CD8-positive, alpha-beta T cell (primary cell): ENCODE measurements at regions of chr16 and their contacts with region 1.

Region 1: DNA sequence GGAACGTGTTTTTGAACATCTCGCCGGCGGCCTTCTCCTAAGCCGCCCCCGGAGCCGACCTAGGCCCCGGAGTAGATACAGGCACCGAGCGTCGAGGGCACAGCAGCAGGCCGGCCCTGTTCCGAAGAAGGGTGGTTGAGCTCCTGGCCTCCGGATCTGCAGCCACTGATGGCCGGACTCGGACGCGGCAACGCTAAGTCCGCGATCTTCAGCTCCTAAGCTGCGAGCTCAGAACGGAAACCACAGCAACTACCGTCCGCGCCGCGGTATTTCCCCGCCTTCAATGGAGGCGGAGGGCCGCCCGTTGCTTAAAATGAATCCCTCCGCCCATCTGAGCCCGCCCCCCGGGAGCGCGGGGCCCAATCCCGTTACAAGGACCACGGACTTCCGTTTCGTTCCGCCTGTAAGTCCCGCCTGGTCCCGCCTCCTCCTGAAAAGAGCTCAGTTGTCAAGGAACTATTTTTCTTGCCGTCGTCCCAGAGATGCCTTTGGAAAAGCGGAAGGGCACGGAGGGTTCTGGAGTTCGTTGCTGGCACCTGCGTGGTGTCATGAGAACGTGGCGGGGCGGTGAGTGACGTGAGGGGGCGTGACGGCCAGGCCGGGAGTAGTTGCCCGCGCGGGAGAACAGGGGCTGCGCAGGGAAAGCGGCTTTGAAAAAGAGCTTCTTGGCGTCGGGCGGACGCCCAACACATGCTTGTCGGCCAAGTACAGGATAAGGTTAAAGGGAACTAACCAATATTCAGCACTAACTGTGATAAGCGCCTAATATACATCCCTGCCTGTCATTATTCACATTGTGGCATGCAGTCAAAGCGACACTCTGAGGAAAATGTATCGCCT is at the start of gene CFAP20:
- DNase-seq: peak; percentile 92 to 98 (median 96)
- ATAC-seq: peak; percentile 90
- H3K4me3 ChIP-seq: peak within 1 kb of the TSS; percentile 75 to 95
- H3K4me3 Mint-ChIP-seq: peak within 1 kb of the TSS; percentile 99
- H3K27ac ChIP-seq: peak within 1 kb of the TSS; percentile 82 to 91
- H3K27ac Mint-ChIP-seq: peak within 1 kb of the TSS; percentile 98
- H3K4me1 ChIP-seq: peaks cover 30% of the 10 kb centered on the region
- H3K4me1 Mint-ChIP-seq: peaks cover 44% of the 10 kb centered on the region
- H3K27me3 ChIP-seq: no peaks in the 10 kb centered on the region
- H3K27me3 Mint-ChIP-seq: no peaks in the 10 kb centered on the region
- CTCF ChIP-seq: no peak
- total RNA-seq, gene CFAP20: 102 to 104 TPM

Region 2: GRCh38 chr16:56450986-56451752 is 1678.1 kb before region 1 on chr16 and contains the starts of genes NUDT21 and OGFOD1:
- CTCF ChIA-PET with region 1: no interaction called
- POLR2A ChIA-PET with region 1: no interaction called
- intact Hi-C with region 1: loop called in 1 of 2 experiments (anchors 10 kb)
- DNase-seq: peak; percentile 82 to 98 (median 90)
- ATAC-seq: peak; percentile 98
- H3K4me3 ChIP-seq: peak within 1 kb of the TSS; percentile 85 to 87
- H3K4me3 Mint-ChIP-seq: peak within 1 kb of the TSS; percentile 97
- H3K27ac ChIP-seq: peak within 1 kb of the TSS; percentile 76 to 77
- H3K27ac Mint-ChIP-seq: peak within 1 kb of the TSS; percentile 94
- H3K4me1 ChIP-seq: peaks cover 31% of the 10 kb centered on the region
- H3K4me1 Mint-ChIP-seq: peaks cover 60% of the 10 kb centered on the region
- H3K27me3 ChIP-seq: no peaks in the 10 kb centered on the region
- H3K27me3 Mint-ChIP-seq: no peaks in the 10 kb centered on the region
- CTCF ChIP-seq: no peak
- total RNA-seq, gene NUDT21: 99.1 to 106 TPM
- total RNA-seq, gene OGFOD1: 17.0 to 21.5 TPM

Region 3: DNA sequence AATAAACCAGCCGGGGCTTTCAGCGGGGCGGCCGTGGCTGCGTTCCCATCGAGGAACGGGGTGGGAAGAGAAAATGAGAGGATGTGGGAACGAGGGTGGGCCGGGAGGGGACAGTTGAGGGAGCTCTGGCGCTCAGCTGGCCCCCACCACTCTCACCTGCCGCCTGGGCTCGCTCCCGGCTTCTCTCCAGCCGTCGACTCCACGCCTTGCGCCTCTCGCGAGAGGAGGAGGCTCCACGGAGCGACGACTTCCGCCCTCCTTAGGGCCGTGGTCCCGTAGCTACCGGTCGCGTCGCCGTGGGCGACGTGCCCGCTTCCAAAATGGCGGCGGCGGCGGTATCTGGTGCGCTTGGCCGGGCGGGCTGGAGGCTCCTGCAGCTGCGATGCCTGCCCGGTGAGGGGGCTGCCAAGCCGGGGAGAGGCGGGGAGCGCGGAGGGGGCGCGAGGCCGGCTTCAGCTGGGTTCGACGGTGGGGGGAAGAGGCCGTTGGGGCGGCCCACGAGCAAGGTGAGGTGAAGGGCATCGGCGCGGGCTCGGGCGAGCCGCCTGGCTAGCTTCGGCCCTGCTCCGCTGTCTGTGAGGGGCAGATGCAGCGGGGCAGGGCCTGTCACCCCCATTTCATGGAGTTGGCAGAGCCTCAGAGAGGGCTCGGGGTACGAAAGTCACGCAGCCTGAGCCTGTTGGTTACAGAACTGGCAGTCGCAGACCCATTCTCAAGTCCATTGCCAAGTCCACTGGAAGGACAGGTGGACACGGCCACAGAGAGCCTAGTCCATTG is 681.9 kb before region 1 on chr16 and contains the starts of genes CIAPIN1 and COQ9:
- CTCF ChIA-PET with region 1: no interaction called
- POLR2A ChIA-PET with region 1: no interaction called
- intact Hi-C with region 1: loop called in 1 of 2 experiments (anchors 5 kb)
- DNase-seq: peak; percentile 85 to 97 (median 92)
- ATAC-seq: peak; percentile 98
- H3K4me3 ChIP-seq: peak within 1 kb of the TSS; percentile 93 to 96
- H3K4me3 Mint-ChIP-seq: peak within 1 kb of the TSS; percentile 91
- H3K27ac ChIP-seq: peak within 1 kb of the TSS; percentile 79 to 83
- H3K27ac Mint-ChIP-seq: peak within 1 kb of the TSS; percentile 93
- H3K4me1 ChIP-seq: peaks cover 20% of the 10 kb centered on the region
- H3K4me1 Mint-ChIP-seq: peaks cover 53% of the 10 kb centered on the region
- H3K27me3 ChIP-seq: no peaks in the 10 kb centered on the region
- H3K27me3 Mint-ChIP-seq: no peaks in the 10 kb centered on the region
- CTCF ChIP-seq: no peak
- total RNA-seq, gene CIAPIN1: 28.6 to 29.7 TPM
- total RNA-seq, gene COQ9: 8.1 to 11.7 TPM

Region 4: GRCh38 chr16:57899771-57900661 is 229.3 kb before region 1 on chr16:
- CTCF ChIA-PET with region 1: no interaction called
- POLR2A ChIA-PET with region 1: no interaction called
- intact Hi-C with region 1: loop called (anchors 5 kb)
- DNase-seq: peak; percentile 59 to 89 (median 82)
- ATAC-seq: peak; percentile 76
- H3K4me3 ChIP-seq: no peak overlapping the region
- H3K4me3 Mint-ChIP-seq: no peak overlapping the region
- H3K27ac ChIP-seq: no peak overlapping the region
- H3K27ac Mint-ChIP-seq: no peak overlapping the region
- H3K4me1 ChIP-seq: no peaks in the 10 kb centered on the region
- H3K4me1 Mint-ChIP-seq: peaks cover 3% of the 10 kb centered on the region
- H3K27me3 ChIP-seq: no peaks in the 10 kb centered on the region
- H3K27me3 Mint-ChIP-seq: peaks cover 20% of the 10 kb centered on the region
- CTCF ChIP-seq: peak; percentile 92

Region 5: GRCh38 chr16:58025351-58026138 is 103.8 kb before region 1 on chr16 and contains the start of gene MMP15:
- CTCF ChIA-PET with region 1: interaction called, 3 read pairs
- POLR2A ChIA-PET with region 1: no interaction called
- intact Hi-C with region 1: loop called (anchors 1 to 2 kb)
- DNase-seq: peak in 8 of 9 experiments; percentile 39 to 71 (median 60)
- ATAC-seq: peak; percentile 65
- H3K4me3 ChIP-seq: peak within 1 kb of the TSS; percentile 60 to 66
- H3K4me3 Mint-ChIP-seq: peak within 1 kb of the TSS; percentile 90
- H3K27ac ChIP-seq: peak within 1 kb of the TSS in 1 of 2 experiments; percentile 18
- H3K27ac Mint-ChIP-seq: peak within 1 kb of the TSS; percentile 83
- H3K4me1 ChIP-seq: peaks cover 8% of the 10 kb centered on the region
- H3K4me1 Mint-ChIP-seq: peaks cover 13% of the 10 kb centered on the region
- H3K27me3 ChIP-seq: peaks cover 0 to 10% of the 10 kb centered on the region in 2 experiments
- H3K27me3 Mint-ChIP-seq: peaks cover 6% of the 10 kb centered on the region
- CTCF ChIP-seq: no peak
- total RNA-seq, gene MMP15: 0.19 to 0.92 TPM

Region 6: GRCh38 chr16:58249780-58250478 is 120.6 kb after region 1 on chr16:
- CTCF ChIA-PET with region 1: no interaction called
- POLR2A ChIA-PET with region 1: interaction called, 6 read pairs
- intact Hi-C with region 1: loop called (anchors 1 to 5 kb)
- DNase-seq: peak; percentile 70 to 91 (median 81)
- ATAC-seq: peak; percentile 98
- H3K4me3 ChIP-seq: peak overlapping the region; percentile 64 to 75
- H3K4me3 Mint-ChIP-seq: peak overlapping the region; percentile 83
- H3K27ac ChIP-seq: peak overlapping the region in 1 of 2 experiments; percentile 21
- H3K27ac Mint-ChIP-seq: no peak overlapping the region
- H3K4me1 ChIP-seq: peaks cover 10% of the 10 kb centered on the region
- H3K4me1 Mint-ChIP-seq: peaks cover 9% of the 10 kb centered on the region
- H3K27me3 ChIP-seq: peaks cover 0 to 6% of the 10 kb centered on the region in 2 experiments
- H3K27me3 Mint-ChIP-seq: peaks cover 2% of the 10 kb centered on the region
- CTCF ChIP-seq: no peak

Region 7: DNA sequence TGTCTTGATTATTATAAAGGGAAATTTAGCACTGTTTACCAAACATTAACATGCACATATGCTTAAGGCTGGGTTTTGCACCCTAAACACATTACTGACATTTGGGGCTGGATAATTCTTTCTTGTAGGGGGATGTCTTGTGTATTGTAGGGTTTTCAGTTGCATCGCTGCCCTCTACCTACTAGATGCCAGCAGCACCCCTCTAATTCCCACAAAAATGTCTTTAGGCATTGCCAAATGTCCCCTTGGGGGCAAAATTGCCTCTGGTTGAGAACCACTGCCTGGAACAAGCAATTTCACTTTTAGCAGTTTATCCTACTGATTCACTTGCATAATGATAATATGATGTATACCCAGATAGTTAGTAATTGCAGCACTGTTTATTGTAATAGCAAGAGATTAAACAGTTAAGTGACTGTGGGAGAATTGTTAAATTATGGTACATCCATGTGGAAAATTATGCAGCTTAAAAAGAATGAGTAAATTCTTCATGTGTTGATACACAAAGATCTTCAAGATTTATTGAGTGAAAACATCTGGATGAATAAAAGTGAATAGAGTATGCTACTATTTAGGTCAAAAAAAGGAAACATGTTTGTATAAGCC is 147.1 kb after region 1 on chr16:
- CTCF ChIA-PET with region 1: no interaction called
- POLR2A ChIA-PET with region 1: no interaction called
- intact Hi-C with region 1: no loop called
- DNase-seq: no peak
- ATAC-seq: no peak
- H3K4me3 ChIP-seq: no peak overlapping the region
- H3K4me3 Mint-ChIP-seq: no peak overlapping the region
- H3K27ac ChIP-seq: no peak overlapping the region
- H3K27ac Mint-ChIP-seq: no peak overlapping the region
- H3K4me1 ChIP-seq: no peaks in the 10 kb centered on the region
- H3K4me1 Mint-ChIP-seq: no peaks in the 10 kb centered on the region
- H3K27me3 ChIP-seq: no peaks in the 10 kb centered on the region
- H3K27me3 Mint-ChIP-seq: no peaks in the 10 kb centered on the region
- CTCF ChIP-seq: no peak

Region 8: DNA sequence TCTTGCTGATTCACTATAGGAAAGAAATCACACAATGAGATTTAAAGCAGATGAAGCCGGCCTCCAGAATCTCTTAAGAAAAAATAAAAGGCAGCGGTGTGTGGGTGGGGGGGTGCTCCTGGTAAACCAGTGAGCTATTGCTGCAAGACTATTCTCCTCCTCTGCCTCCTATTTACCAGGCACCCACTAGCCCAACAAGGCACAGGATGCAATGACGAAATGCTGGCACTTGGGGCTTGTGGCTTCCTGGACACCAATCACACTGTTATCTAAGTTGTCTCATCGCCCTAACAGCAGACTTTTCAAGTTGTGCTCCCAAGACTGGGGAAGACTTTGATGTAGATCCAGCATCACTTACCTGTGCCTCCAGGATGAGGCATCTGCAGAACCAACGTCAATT is 320.5 kb after region 1 on chr16:
- CTCF ChIA-PET with region 1: no interaction called
- POLR2A ChIA-PET with region 1: no interaction called
- intact Hi-C with region 1: no loop called
- DNase-seq: peak in 2 of 9 experiments; percentile 17 to 30
- ATAC-seq: no peak
- H3K4me3 ChIP-seq: no peak overlapping the region
- H3K4me3 Mint-ChIP-seq: no peak overlapping the region
- H3K27ac ChIP-seq: no peak overlapping the region
- H3K27ac Mint-ChIP-seq: no peak overlapping the region
- H3K4me1 ChIP-seq: no peaks in the 10 kb centered on the region
- H3K4me1 Mint-ChIP-seq: no peaks in the 10 kb centered on the region
- H3K27me3 ChIP-seq: no peaks in the 10 kb centered on the region
- H3K27me3 Mint-ChIP-seq: peaks cover 16% of the 10 kb centered on the region
- CTCF ChIP-seq: no peak

Region 9: DNA sequence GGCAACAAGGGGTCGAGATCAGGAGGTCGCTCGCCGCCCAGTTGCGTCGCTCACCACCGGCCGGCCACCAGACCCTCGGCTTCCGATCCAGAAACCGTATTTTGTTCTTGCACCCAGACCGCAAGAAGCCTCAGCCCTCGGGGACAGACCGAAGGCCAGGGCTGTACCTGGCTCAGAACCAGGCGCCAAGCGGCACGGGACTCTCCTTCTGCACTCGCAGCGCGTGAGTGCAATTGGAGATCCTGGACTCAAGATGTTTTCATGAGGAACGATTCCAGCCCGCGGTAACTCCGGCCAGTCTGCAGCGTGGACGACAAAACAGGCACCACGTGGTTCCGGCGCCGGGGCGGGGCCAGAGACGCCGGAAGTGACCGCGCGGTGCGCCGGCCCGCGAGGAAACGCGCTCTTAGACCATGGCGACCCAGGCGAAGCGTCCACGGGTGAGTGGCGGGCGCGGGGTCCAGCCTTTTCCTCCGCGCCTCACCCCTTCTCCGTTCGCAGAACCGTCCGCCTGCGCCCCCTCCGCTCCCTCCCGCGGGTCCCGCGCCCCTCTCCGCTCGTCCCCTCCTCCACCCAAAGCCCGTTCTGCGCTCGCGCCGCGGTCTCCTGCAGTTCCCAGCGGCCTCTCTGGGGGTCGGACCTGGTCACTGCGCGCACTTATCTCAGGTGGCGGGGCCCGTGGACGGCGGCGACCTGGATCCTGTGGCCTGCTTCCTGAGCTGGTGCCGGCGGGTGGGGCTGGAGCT is 386.0 kb after region 1 on chr16 and contains the start of gene SETD6:
- CTCF ChIA-PET with region 1: no interaction called
- POLR2A ChIA-PET with region 1: no interaction called
- intact Hi-C with region 1: loop called in 1 of 2 experiments (anchors 5 kb)
- DNase-seq: peak; percentile 25 to 81 (median 68)
- ATAC-seq: peak; percentile 59
- H3K4me3 ChIP-seq: peak within 1 kb of the TSS; percentile 72 to 92
- H3K4me3 Mint-ChIP-seq: peak within 1 kb of the TSS; percentile 90
- H3K27ac ChIP-seq: peak within 1 kb of the TSS; percentile 64 to 73
- H3K27ac Mint-ChIP-seq: peak within 1 kb of the TSS; percentile 80
- H3K4me1 ChIP-seq: peaks cover 13% of the 10 kb centered on the region
- H3K4me1 Mint-ChIP-seq: peaks cover 20% of the 10 kb centered on the region
- H3K27me3 ChIP-seq: no peaks in the 10 kb centered on the region
- H3K27me3 Mint-ChIP-seq: no peaks in the 10 kb centered on the region
- CTCF ChIP-seq: no peak
- total RNA-seq, gene SETD6: 17.3 to 17.4 TPM